ENCODE measurements at regions of chr3 and their contacts with region 1.

Region 1: DNA sequence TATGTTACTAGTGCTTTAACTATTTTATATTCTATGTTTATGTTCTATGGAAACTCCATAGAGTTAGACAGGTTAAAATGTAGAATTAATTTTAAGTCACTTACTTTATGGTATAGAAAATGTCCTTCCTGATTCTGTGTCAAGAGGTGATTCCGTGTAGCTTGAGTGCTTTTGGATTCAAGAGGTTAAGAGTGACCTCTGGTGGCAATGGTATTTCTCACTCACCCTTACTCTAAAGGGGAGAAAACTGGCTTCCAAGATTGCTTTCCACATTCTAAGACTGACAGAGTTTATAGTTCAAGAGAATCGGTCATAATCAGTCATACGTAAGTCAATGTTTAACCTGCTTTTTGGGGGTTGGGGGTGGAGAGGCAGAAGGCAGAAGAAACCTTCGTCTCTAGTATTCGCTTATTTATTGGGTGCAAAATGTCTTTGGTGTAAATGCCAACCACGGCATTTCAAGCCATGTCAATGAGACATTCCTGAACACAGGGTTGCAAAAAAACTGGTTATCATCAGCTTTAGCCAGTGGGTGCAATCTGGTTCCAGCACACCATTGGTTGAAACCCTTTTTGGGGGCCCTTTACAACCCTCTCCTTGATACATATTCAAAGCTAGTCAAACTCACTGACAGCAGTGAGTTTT is 92.0 kb upstream of the VGLL3 start:
- DNase-seq: peak; percentile 40
- CTCF ChIP-seq: peak; percentile 43

Region 2: DNA sequence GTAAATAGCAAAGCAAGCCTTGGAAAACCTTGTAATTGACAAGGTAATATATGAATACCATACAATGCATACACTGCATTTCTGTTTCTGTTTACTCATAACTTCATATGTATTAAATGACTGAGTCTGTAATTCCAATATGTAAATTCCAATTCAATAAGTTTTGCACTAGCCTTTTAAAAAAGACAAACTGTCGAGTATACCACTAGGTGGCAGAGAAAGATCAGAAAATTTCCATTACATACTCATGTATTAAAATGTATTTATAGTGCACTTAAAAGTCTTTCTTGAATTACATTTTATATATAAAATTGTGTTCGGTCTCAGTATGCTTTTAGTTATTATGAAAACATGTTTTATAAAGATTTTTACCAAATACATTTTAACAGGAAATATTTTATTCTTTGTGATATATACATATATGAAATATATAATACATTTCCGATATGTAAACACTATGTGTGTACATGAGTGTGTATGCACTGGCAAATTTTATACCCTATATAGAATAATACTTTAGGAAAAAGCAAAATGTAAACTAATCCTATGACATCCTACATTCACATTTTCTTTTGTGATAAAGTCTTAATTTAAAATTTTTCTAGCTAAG is 308.7 kb before region 1 on chr3:
- CTCF ChIA-PET with region 1: interaction called, 11 read pairs
- POLR2A ChIA-PET with region 1: no interaction called
- DNase-seq: peak; percentile 8
- CTCF ChIP-seq: peak; percentile 25

Region 3: GRCh38 chr3:87173776-87174175 is 90.9 kb after region 1 on chr3:
- CTCF ChIA-PET with region 1: no interaction called
- POLR2A ChIA-PET with region 1: no interaction called
- DNase-seq: no peak
- CTCF ChIP-seq: no peak

Measured in GM10248 (cell line).